HepG2 (cell line): ENCODE measurements at regions of chr12 and their contacts with region 1.

Region 1: GRCh38 chr12:111451649-111452129 is 46.0 kb downstream of the SH2B3 start:
- DNase-seq: peak; percentile 53
- ATAC-seq: no peak
- H3K4me3 ChIP-seq: no peak overlapping the region
- H3K27ac ChIP-seq: no peak overlapping the region
- H3K4me1 ChIP-seq: no peaks in the 10 kb centered on the region
- H3K27me3 ChIP-seq: no peaks in the 10 kb centered on the region
- CTCF ChIP-seq: peak; percentile 70
- EP300 ChIP-seq: no peak
- POLR2A ChIP-seq: no peak
- RAD21 ChIP-seq: peak; percentile 44; the same call in 1 of the 2 replicates

Region 2: GRCh38 chr12:111330800-111331752 is 120.6 kb before region 1 on chr12:
- CTCF ChIA-PET with region 1: interaction called, 12 read pairs
- POLR2A ChIA-PET with region 1: interaction called, 4 read pairs
- in situ Hi-C with region 1: no loop called
- intact Hi-C with region 1: loop called (anchors 1 kb)
- DNase-seq: peak; percentile 59
- ATAC-seq: peak; percentile 61
- H3K4me3 ChIP-seq: no peak overlapping the region
- H3K27ac ChIP-seq: no peak overlapping the region
- H3K4me1 ChIP-seq: no peaks in the 10 kb centered on the region
- H3K27me3 ChIP-seq: peaks cover 0 to 13% of the 10 kb centered on the region in 2 experiments; a peak in 2 of 5 replicates
- CTCF ChIP-seq: peak; percentile 78
- EP300 ChIP-seq: no peak
- POLR2A ChIP-seq: no peak
- RAD21 ChIP-seq: peak; percentile 36; the same call in 1 of the 2 replicates

Region 3: DNA sequence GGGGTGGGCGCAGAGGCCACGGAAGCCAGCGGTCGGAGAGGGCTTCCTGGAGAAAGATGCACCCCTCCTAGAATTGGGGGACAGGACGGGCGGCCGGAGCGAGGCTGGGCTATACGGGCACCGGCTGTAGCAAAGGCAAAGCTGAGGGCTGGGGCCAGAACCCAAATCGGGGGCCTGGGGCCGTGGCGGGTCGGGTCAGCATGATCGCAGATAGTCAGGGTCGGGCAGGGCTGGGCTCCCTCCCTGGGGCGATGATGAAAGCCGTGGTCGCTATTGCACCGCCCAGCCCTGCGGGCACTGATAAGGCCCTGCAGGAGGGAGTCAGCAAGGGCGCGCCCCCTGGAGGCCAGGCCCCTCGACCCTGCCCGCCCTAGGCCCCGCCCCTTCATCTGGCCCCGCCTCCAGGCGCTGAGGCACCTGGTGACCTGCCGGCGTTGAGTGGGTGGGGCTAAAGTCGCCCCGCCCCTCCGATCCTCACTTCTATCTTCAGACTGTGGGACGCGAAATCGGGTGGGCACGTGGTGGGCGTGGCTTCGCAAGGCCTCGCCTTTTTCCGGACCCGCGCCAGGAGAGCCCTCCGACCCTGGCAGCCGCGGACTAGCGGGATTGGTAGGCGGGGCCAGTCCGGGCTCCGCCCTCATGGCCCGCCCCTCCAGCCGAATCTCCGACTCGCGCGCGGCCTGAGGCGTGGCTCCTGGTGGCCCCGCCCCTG is 46.4 kb before region 1 on chr12:
- CTCF ChIA-PET with region 1: no interaction called
- POLR2A ChIA-PET with region 1: interaction called, 3 read pairs
- in situ Hi-C with region 1: no loop called
- intact Hi-C with region 1: loop called (anchors 2 kb)
- DNase-seq: peak; percentile 95
- ATAC-seq: peak; percentile 83
- H3K4me3 ChIP-seq: peak overlapping the region; percentile 92 to 95 (median 93)
- H3K27ac ChIP-seq: peak overlapping the region; percentile 68
- H3K4me1 ChIP-seq: peaks cover 59% of the 10 kb centered on the region
- H3K27me3 ChIP-seq: no peaks in the 10 kb centered on the region; a peak in 1 of 5 replicates
- CTCF ChIP-seq: peak; percentile 96
- EP300 ChIP-seq: no peak
- POLR2A ChIP-seq: peak; percentile 52 to 78
- RAD21 ChIP-seq: peak; percentile 61; the same call in 1 of the 2 replicates